MCF 10A (cell line): ENCODE measurements at regions of chr2 and their contacts with region 1.

Region 1: GRCh38 chr2:47437287-47437686 is 34.3 kb downstream of the MSH2 start:
- DNase-seq: peak; percentile 46
- H3K4me3 Mint-ChIP-seq: no peak overlapping the region
- H3K27ac Mint-ChIP-seq: no peak overlapping the region
- H3K4me1 Mint-ChIP-seq: no peaks in the 10 kb centered on the region
- H3K27me3 Mint-ChIP-seq: no peaks in the 10 kb centered on the region
- CTCF ChIP-seq: peak; percentile 60

Region 2: DNA sequence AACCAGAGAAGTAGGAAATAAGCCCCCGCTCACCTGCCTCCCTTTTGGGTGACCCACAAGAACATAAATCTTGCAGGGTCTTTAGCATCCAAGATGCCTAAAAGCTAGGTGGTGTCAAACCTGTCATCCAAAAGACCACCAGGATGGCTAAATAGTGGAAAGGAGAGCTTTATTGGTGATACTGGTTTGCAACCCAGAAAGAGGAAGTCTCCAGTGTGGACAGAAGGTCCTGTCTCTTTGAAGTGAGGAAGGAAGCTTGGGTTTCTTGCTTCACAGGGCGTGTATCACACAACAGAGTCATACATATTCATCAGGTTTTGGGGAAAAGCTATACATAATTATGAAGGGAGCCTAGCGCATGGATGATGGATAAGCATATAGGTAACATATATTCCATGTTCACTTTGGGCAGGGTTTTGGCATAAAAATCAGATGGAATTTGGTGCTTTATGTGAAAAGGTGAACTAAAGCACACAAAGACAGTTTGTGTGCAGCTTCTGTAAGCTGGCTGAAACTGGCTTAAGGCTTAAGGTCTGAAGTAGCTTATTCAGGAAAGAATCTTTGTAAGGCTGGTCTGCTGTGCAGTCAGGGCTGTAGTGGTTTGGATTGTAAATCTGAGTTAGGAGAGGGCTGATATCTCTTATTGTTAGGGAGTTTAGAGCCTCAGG is 136.5 kb before region 1 on chr2:
- CTCF ChIA-PET with region 1: no interaction called
- POLR2A ChIA-PET with region 1: no interaction called
- intact Hi-C with region 1: no loop called
- DNase-seq: no peak
- H3K4me3 Mint-ChIP-seq: no peak overlapping the region
- H3K27ac Mint-ChIP-seq: no peak overlapping the region
- H3K4me1 Mint-ChIP-seq: peaks cover 19% of the 10 kb centered on the region
- H3K27me3 Mint-ChIP-seq: no peaks in the 10 kb centered on the region
- CTCF ChIP-seq: no peak

Region 3: GRCh38 chr2:47339745-47340541 is 97.3 kb before region 1 on chr2:
- CTCF ChIA-PET with region 1: interaction called, 14 read pairs
- POLR2A ChIA-PET with region 1: interaction called, 4 read pairs
- intact Hi-C with region 1: no loop called
- DNase-seq: peak; percentile 93
- H3K4me3 Mint-ChIP-seq: no peak overlapping the region
- H3K27ac Mint-ChIP-seq: no peak overlapping the region
- H3K4me1 Mint-ChIP-seq: peaks cover 12% of the 10 kb centered on the region
- H3K27me3 Mint-ChIP-seq: no peaks in the 10 kb centered on the region
- CTCF ChIP-seq: no peak

Region 4: GRCh38 chr2:47373747-47374146 is 63.5 kb before region 1 on chr2:
- CTCF ChIA-PET with region 1: no interaction called
- POLR2A ChIA-PET with region 1: no interaction called
- intact Hi-C with region 1: no loop called
- DNase-seq: no peak
- H3K4me3 Mint-ChIP-seq: no peak overlapping the region
- H3K27ac Mint-ChIP-seq: no peak overlapping the region
- H3K4me1 Mint-ChIP-seq: no peaks in the 10 kb centered on the region
- H3K27me3 Mint-ChIP-seq: no peaks in the 10 kb centered on the region
- CTCF ChIP-seq: no peak

Region 5: DNA sequence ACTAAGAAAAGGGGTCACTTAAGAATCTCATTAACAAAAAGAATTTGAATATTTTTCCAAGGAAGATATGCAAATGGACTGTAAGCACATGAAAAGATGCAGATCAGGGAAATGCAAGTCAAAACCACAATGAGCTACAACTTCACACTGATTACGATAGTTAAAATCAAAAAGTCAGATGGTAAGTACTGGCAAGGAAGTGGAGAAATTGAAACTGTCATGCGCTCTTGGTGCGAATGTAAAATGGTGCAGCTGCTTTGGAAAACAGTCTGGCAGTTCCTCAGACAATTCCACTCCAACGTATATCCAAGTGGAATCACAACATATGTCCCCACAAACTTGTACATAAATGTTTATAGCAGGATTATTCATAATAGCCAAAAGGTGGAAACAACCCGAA is 47.1 kb after region 1 on chr2:
- CTCF ChIA-PET with region 1: interaction called, 14 read pairs
- POLR2A ChIA-PET with region 1: interaction called, 3 read pairs
- intact Hi-C with region 1: no loop called
- DNase-seq: no peak
- H3K4me3 Mint-ChIP-seq: no peak overlapping the region
- H3K27ac Mint-ChIP-seq: no peak overlapping the region
- H3K4me1 Mint-ChIP-seq: peaks cover 7% of the 10 kb centered on the region
- H3K27me3 Mint-ChIP-seq: no peaks in the 10 kb centered on the region
- CTCF ChIP-seq: no peak

Region 6: DNA sequence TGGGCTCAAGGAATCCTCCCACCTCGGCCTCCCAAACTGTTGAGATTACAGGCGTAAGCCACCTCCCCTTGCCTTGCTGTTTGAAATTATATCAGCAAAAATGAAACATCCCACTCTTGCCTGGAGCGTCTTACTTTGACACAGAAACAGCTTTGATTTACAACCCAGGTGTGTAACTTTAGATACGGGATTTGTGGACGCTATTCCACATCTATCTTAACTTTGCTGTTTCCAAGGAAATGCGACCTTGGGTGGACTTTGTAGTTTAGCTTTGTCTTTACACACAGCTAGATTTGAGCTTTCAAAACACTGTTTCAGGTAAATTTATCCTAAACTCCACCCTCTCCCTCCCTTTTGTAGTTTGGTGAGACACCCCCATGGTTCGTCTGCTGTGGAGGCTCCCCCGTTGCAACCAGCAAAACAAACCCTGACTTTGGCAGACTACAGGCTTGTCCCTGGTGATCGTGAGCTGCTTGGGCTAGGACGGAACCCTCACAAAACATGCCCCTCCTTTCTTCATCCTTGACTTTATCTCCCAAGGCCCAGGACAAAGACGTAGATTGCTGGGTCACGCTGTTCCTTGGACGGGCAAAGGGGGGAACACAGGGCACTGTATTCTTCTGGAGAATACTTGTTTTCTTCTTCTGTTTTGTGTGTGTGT is 340.1 kb after region 1 on chr2:
- CTCF ChIA-PET with region 1: interaction called, 319 read pairs
- POLR2A ChIA-PET with region 1: interaction called, 5 read pairs
- intact Hi-C with region 1: no loop called
- DNase-seq: no peak
- H3K4me3 Mint-ChIP-seq: no peak overlapping the region
- H3K27ac Mint-ChIP-seq: no peak overlapping the region
- H3K4me1 Mint-ChIP-seq: no peaks in the 10 kb centered on the region
- H3K27me3 Mint-ChIP-seq: no peaks in the 10 kb centered on the region
- CTCF ChIP-seq: no peak

Region 7: DNA sequence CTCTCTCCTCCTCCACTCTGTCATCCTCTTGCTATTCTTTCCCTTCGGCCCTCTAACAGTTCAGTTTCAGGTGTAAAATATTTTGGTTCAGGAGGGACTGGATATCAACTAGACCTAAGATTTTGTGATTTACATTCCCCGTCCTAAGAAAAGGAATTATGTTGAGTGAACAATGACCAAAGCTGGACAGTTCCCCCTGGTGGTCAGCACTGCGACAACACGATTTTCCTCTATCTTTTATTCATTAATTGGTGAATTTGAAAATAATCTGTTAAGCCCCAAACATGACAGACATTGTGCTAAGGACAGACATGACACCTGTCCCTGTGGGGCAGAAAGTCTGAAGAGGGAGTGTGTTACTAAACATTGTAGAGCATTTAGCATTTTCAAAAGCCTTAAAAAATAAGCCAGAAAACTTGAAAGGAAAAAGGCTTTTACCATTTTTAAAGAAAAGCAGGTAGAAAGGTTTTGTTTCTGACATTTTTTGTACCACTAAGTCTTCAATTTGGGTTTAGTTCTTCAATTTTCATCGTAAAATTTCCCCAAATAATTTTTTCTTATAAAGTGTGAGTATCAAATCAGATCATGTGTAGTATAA is 1152.0 kb after region 1 on chr2:
- CTCF ChIA-PET with region 1: no interaction called
- POLR2A ChIA-PET with region 1: no interaction called
- intact Hi-C with region 1: loop called (anchors 5 kb)
- DNase-seq: peak; percentile 49
- H3K4me3 Mint-ChIP-seq: no peak overlapping the region
- H3K27ac Mint-ChIP-seq: no peak overlapping the region
- H3K4me1 Mint-ChIP-seq: no peaks in the 10 kb centered on the region
- H3K27me3 Mint-ChIP-seq: no peaks in the 10 kb centered on the region
- CTCF ChIP-seq: peak; percentile 71